ENCODE measurements at regions of chr1 and their contacts with region 1.

Region 1: DNA sequence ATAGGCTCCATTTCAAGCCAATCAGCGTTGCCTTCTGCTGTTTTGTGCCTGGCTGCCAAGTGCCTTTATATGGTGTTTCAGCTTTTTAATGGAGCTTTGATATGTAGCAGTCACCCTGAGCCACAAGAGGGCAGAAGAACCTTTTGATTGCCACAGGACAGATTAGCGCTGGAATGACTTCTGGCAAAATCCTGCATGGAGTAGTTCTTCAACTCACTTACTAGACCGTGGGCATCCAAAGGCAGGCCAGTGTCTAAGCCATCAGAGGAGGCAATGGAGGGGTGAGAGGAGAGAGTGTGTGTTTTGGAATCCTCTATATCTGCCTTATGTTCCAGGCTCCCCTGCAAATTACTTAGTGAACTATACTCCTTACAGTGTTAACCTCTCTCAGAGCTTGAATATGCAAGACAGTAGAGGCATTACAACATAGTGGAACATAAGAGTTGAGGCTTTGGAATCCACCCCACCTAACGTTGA is 56.2 kb downstream of the ST3GAL3 start:
- DNase-seq: peak; percentile 52
- H3K4me3 Mint-ChIP-seq: no peak overlapping the region
- H3K27ac Mint-ChIP-seq: no peak overlapping the region
- H3K4me1 Mint-ChIP-seq: no peaks in the 10 kb centered on the region
- H3K27me3 Mint-ChIP-seq: no peaks in the 10 kb centered on the region

Region 2: GRCh38 chr1:43650310-43651085 is 113.0 kb before region 1 on chr1:
- CTCF ChIA-PET with region 1: interaction called, 10 read pairs
- POLR2A ChIA-PET with region 1: no interaction called
- DNase-seq: peak; percentile 93
- H3K4me3 Mint-ChIP-seq: peak overlapping the region; percentile 99
- H3K27ac Mint-ChIP-seq: peak overlapping the region; percentile 94
- H3K4me1 Mint-ChIP-seq: peaks cover 37% of the 10 kb centered on the region
- H3K27me3 Mint-ChIP-seq: peaks cover 5% of the 10 kb centered on the region

Region 3: GRCh38 chr1:43706598-43707495 is 56.7 kb before region 1 on chr1:
- CTCF ChIA-PET with region 1: no interaction called
- POLR2A ChIA-PET with region 1: no interaction called
- DNase-seq: peak; percentile 94
- H3K4me3 Mint-ChIP-seq: peak overlapping the region; percentile 91
- H3K27ac Mint-ChIP-seq: peak overlapping the region; percentile 61
- H3K4me1 Mint-ChIP-seq: peaks cover 45% of the 10 kb centered on the region
- H3K27me3 Mint-ChIP-seq: no peaks in the 10 kb centered on the region

Region 4: GRCh38 chr1:43722810-43723209 is 40.7 kb before region 1 on chr1:
- CTCF ChIA-PET with region 1: no interaction called
- POLR2A ChIA-PET with region 1: no interaction called
- DNase-seq: no peak
- H3K4me3 Mint-ChIP-seq: no peak overlapping the region
- H3K27ac Mint-ChIP-seq: no peak overlapping the region
- H3K4me1 Mint-ChIP-seq: no peaks in the 10 kb centered on the region
- H3K27me3 Mint-ChIP-seq: no peaks in the 10 kb centered on the region

Region 5: GRCh38 chr1:43779266-43779665 is 15.7 kb after region 1 on chr1:
- CTCF ChIA-PET with region 1: interaction called, 11 read pairs
- POLR2A ChIA-PET with region 1: interaction called, 3 read pairs
- DNase-seq: no peak
- H3K4me3 Mint-ChIP-seq: no peak overlapping the region
- H3K27ac Mint-ChIP-seq: peak overlapping the region; percentile 74
- H3K4me1 Mint-ChIP-seq: peaks cover 36% of the 10 kb centered on the region
- H3K27me3 Mint-ChIP-seq: no peaks in the 10 kb centered on the region

Region 6: DNA sequence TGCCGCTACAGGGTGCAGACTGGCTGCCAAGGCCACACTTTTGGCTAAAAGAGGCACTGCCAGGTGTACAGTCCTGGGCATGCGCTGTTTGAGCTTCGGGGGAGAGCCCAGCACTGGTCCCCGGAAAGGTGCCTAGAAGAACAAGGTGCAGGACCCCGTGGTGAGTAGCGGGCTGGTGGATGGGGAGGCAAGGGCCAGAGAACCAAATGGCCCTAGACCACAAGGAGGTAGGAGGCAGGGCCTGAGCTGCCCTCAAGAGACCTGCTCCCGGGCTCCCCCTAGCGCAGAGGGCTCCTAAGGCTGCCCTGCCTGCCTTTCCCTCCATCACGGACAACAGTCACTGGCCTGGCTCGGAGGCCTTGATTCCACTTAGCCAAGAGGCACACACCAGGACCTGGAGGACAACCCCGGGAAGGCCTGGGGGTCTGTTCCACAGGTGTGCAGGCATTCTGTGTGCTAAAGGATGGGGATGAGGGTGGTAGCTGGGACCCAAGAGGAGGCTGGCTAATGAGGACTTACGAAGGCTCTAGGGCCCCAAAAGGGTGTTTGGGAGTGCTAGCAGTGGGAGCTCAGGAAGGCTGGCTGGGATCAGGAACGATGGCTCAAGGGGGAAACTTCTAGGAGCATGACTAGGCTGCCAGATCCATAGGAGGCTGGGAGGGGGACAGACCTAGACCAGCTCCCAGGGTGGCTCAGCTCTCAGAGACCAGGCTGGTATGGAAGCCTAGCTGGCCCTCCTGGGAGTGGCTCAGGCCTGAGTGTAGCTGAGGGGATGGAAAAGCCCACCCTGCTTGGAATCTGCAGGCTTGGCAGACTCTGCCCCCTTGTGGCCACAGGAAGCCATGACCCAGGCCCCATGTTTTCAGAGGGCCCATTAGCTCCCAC is 170.8 kb after region 1 on chr1:
- CTCF ChIA-PET with region 1: interaction called, 324 read pairs
- POLR2A ChIA-PET with region 1: interaction called, 13 read pairs
- DNase-seq: peak; percentile 65
- H3K4me3 Mint-ChIP-seq: no peak overlapping the region
- H3K27ac Mint-ChIP-seq: no peak overlapping the region
- H3K4me1 Mint-ChIP-seq: peaks cover 11% of the 10 kb centered on the region
- H3K27me3 Mint-ChIP-seq: peaks cover 11% of the 10 kb centered on the region

Region 7: DNA sequence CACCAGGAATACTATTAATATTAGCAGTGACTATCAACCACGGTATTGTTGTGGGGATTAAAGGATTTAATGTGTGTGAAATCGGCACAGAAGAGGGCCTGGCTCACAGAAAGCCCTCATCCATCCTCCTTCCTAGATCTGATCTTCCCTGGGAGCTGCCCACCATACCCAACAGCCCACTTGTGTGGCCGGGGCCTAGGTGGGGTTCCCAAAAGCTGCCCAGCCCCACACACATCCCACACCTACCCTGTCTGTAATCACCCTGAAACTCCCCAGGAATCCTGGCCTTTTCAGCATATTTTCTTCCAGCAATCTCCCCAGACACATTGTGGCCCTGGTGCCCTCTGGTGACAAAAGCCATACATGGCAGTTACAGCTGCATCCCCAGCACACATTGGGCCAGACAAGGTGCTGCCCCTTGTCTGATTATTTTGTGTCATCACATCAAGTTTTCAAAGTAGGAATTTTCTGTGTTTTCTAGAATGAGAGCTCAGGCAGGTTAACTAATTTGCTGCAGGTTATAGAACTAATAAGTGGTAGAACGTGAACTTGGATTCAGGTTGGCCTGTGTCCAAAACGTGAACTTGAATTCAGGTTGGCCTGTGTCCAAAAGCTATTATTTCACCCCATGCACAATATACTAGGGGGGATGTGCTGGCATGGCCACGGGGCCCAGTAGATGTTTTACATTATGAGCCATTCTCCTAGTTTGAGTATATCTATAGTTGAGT is 273.0 kb after region 1 on chr1:
- CTCF ChIA-PET with region 1: interaction called, 16 read pairs
- POLR2A ChIA-PET with region 1: no interaction called
- DNase-seq: peak; percentile 71
- H3K4me3 Mint-ChIP-seq: no peak overlapping the region
- H3K27ac Mint-ChIP-seq: no peak overlapping the region
- H3K4me1 Mint-ChIP-seq: peaks cover 15% of the 10 kb centered on the region
- H3K27me3 Mint-ChIP-seq: peaks cover 7% of the 10 kb centered on the region

Region 8: DNA sequence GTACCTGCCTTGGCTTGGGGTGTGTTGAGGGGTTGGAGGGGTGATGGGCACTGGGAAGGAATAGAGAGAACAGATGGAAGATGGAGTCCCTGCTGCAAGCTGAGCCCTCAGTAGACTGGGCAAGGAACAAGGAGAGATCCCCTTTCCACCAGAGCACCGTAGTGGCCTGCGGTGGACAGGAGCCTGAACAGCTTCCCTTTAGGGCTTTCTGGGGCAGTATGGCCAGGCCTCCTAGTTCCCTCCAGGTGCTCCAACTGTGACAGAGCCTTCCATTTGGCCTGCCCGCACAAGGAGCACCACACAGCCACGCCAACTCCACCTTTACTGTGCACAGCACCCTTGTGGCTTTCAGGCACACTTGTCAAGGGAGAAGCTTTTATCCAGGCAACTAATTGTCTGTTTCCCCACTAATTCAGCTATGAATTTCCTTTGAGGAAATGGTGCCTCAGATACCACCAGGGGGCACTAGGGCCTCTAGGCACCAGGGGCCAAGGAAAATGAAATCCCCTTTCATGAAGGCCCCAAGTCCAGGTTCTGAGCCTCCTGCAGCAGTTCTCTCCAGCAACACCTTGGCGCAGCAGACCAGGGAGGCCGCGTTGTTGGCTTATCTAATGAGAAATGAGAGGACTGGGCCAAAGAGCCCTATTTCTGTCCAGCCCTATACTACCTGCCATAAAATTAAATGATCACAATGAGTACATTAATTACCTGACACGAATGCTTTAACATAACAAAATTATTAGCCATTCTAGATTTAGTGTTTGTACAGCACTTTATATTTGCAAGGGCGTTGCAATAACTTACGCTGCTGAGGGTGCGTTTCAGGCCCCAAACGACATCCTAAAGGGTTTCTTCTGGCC is 614.6 kb after region 1 on chr1:
- CTCF ChIA-PET with region 1: no interaction called
- POLR2A ChIA-PET with region 1: no interaction called
- DNase-seq: peak; percentile 42
- H3K4me3 Mint-ChIP-seq: no peak overlapping the region
- H3K27ac Mint-ChIP-seq: no peak overlapping the region
- H3K4me1 Mint-ChIP-seq: no peaks in the 10 kb centered on the region
- H3K27me3 Mint-ChIP-seq: peaks cover 6% of the 10 kb centered on the region